Heart left ventricle (tissue), 16 donors: ENCODE measurements at regions of chr1 and their contacts with region 1.

Region 1: GRCh38 chr1:51666478-51666877 is 49.6 kb downstream of the OSBPL9 start:
- DNase-seq: peak in 2 of 5 donors; percentile 36 to 43
- ATAC-seq: peak; percentile 74 to 90 (median 84)
- H3K4me3 ChIP-seq: no peak overlapping the region
- H3K27ac ChIP-seq: peak overlapping the region; percentile 35 to 72 (median 44)
- H3K4me1 ChIP-seq: peaks cover 0 to 92% (median 63%) of the 10 kb centered on the region in 12 donors
- H3K27me3 ChIP-seq: no peaks in the 10 kb centered on the region
- CTCF ChIP-seq: no peak
- POLR2A ChIP-seq: no peak

Region 2: DNA sequence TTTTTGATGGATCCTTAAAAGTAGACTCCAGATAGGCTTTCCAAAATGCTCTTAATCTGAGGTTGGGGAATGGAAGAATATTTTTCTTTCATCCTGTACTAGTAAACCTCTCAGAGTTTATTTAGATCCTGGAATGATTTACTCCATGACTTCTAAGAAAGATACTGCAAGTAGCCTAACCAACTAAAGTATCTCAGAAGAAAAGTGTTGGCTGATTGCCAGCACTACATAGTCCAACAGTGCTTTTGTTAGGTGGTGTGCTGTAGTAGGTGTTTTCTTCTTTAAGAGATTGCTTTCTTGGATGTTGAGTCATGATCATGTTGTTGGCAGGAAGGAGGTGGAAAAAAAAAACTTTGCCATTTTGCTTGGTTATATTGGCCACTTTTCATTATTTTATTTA is 70.2 kb after region 1 on chr1:
- intact Hi-C with region 1: loop called in 3 of 10 experiments (anchors 5 to 10 kb)
- DNase-seq: no peak
- ATAC-seq: peak; percentile 30 to 61 (median 40)
- H3K4me3 ChIP-seq: no peak overlapping the region
- H3K27ac ChIP-seq: peak overlapping the region in 5 of 12 donors; percentile 3 to 64 (median 31)
- H3K4me1 ChIP-seq: peaks cover 0 to 73% (median 47%) of the 10 kb centered on the region in 12 donors
- H3K27me3 ChIP-seq: no peaks in the 10 kb centered on the region
- CTCF ChIP-seq: no peak
- POLR2A ChIP-seq: no peak